ENCODE measurements at regions of chr4 and their contacts with region 1.

Region 1: DNA sequence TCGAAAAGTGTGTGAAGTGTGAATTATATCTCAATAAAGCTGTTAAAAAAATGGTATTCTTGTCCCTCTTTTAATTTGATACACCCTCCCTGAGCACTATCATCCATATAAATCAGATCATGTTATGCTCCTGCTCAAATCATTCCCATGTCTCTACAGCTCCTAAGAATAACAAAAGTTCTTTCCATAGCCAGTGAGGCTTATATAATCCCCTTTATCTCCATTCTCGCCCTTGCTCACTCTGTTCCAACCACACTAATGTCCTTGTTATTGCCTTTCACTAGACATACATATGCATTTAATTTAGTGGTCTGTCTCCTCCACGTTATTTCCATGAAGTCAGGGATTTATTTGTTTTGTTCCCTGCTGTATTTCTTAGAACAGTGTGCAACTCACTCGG is 10.5 kb downstream of the ZGRF1 start:
- DNase-seq: no peak
- CTCF ChIP-seq: no peak

Region 2: GRCh38 chr4:112765317-112765975 is 139.2 kb after region 1 on chr4:
- in situ Hi-C with region 1: loop called (anchors 10 kb)
- DNase-seq: peak; percentile 60
- CTCF ChIP-seq: peak; percentile 59

Region 3: DNA sequence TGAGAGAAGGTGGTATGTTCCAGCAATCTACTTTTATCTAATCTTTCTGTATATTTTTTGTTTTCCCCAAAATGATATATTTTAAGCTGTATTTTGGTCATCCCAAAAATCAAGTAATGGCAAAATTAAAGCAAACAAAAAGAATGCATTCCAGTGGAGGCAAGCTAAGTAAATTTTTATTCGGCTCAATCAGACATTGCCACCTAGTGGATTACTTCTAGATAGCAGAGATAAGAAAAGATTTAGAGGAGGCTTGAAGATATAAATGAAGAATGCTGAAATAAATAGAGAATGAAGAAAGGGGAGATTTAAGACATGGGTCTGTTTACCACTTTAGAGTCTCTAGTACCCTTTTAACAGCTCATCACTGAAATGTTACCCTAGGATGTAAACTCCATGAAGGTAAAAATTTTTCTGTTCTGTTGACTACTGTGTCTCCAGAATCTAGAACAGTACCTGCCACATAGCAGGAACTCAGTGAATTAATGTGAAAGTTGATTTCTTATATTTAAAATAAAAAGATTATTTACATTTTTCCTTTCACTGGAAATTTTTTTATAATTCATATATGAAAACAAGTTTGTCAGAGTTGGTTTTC is 312.3 kb after region 1 on chr4:
- in situ Hi-C with region 1: loop called (anchors 10 kb)
- DNase-seq: peak; percentile 53
- CTCF ChIP-seq: peak; percentile 67

Measured in GM13977 (cell line).